CD4-positive, alpha-beta memory T cell (primary cell): ENCODE measurements at regions of chr18 and their contacts with region 1.

Region 1: GRCh38 chr18:2994603-2995432 is 18.1 kb downstream of the LPIN2 start:
- DNase-seq: peak; percentile 75 to 84 (median 79)
- H3K4me3 ChIP-seq: peak overlapping the region in 1 of 2 donors; percentile 29
- H3K4me3 Mint-ChIP-seq: peak overlapping the region; percentile 53 to 81 (median 68)
- H3K27ac ChIP-seq: peak overlapping the region; percentile 28
- H3K27ac Mint-ChIP-seq: peak overlapping the region; percentile 61 to 94 (median 90)
- H3K4me1 ChIP-seq: peaks cover 62% of the 10 kb centered on the region
- H3K4me1 Mint-ChIP-seq: peaks cover 57 to 87% (median 73%) of the 10 kb centered on the region in 4 donors
- H3K27me3 ChIP-seq: no peaks in the 10 kb centered on the region
- H3K27me3 Mint-ChIP-seq: no peaks in the 10 kb centered on the region

Region 2: DNA sequence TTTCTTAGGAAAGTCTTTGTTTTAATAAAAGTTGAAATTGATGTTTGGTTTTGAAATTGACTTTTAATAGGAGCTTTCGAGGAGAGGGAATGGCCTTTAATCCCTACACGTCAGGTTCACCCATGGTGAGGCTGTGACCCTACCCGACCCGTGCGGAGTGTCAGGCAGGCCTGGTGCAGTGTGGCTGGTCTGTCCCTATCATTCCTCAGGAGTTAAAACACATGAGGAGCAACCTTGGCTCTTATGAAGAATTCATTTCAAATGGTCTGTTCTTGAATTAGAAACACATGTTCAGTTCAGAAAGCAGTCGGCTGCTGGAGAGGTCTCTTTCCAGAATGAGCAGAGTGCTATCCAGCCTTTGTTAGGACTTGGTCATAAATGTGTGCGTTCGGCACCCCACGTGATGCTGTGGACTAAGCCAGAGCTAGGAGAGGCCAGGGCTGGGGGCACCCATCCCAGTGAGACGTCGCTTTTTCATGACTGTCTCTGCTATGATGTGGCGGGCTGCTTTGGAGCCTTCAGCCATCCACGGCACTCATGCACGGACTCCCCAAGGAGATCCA is 93.3 kb before region 1 on chr18:
- CTCF ChIA-PET with region 1: no interaction called
- POLR2A ChIA-PET with region 1: no interaction called
- intact Hi-C with region 1: no loop called
- DNase-seq: no peak
- H3K4me3 ChIP-seq: no peak overlapping the region
- H3K4me3 Mint-ChIP-seq: no peak overlapping the region
- H3K27ac ChIP-seq: no peak overlapping the region
- H3K27ac Mint-ChIP-seq: no peak overlapping the region
- H3K4me1 ChIP-seq: peaks cover 6% of the 10 kb centered on the region
- H3K4me1 Mint-ChIP-seq: peaks cover 4 to 25% (median 6%) of the 10 kb centered on the region in 4 donors
- H3K27me3 ChIP-seq: no peaks in the 10 kb centered on the region
- H3K27me3 Mint-ChIP-seq: no peaks in the 10 kb centered on the region

Region 3: GRCh38 chr18:2923464-2923863 is 71.4 kb before region 1 on chr18:
- CTCF ChIA-PET with region 1: interaction called, 263 read pairs
- POLR2A ChIA-PET with region 1: interaction called, 3 read pairs
- intact Hi-C with region 1: no loop called
- DNase-seq: no peak
- H3K4me3 ChIP-seq: no peak overlapping the region
- H3K4me3 Mint-ChIP-seq: no peak overlapping the region
- H3K27ac ChIP-seq: no peak overlapping the region
- H3K27ac Mint-ChIP-seq: peak overlapping the region in 1 of 7 donors; percentile 51
- H3K4me1 ChIP-seq: no peaks in the 10 kb centered on the region
- H3K4me1 Mint-ChIP-seq: peaks cover 0 to 2% (median 0%) of the 10 kb centered on the region in 4 donors
- H3K27me3 ChIP-seq: no peaks in the 10 kb centered on the region
- H3K27me3 Mint-ChIP-seq: no peaks in the 10 kb centered on the region

Region 4: DNA sequence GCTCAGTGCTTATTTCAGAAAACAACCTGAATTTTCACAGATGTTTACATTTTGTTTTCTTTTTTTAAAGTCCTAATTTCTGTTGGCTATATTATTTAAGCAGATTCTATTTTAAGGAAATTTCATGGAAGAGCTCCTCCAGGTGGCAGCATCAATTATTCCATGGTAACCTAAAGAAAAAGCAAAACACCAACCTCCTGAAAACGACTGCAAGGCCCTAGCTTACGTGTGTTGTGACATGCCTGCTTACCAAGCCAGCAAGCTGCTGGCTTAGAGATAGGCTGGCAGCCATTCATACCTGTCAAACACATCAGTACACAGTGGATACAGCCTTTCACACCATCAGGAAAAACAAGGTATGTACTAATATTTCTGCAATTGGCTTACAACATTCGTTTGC is 46.8 kb before region 1 on chr18:
- CTCF ChIA-PET with region 1: interaction called, 19 read pairs
- POLR2A ChIA-PET with region 1: interaction called, 1,352 read pairs
- intact Hi-C with region 1: no loop called
- DNase-seq: no peak
- H3K4me3 ChIP-seq: no peak overlapping the region
- H3K4me3 Mint-ChIP-seq: no peak overlapping the region
- H3K27ac ChIP-seq: no peak overlapping the region
- H3K27ac Mint-ChIP-seq: peak overlapping the region in 2 of 7 donors; percentile 41 to 57
- H3K4me1 ChIP-seq: peaks cover 39% of the 10 kb centered on the region
- H3K4me1 Mint-ChIP-seq: peaks cover 33 to 66% (median 51%) of the 10 kb centered on the region in 4 donors
- H3K27me3 ChIP-seq: no peaks in the 10 kb centered on the region
- H3K27me3 Mint-ChIP-seq: no peaks in the 10 kb centered on the region

Region 5: GRCh38 chr18:2971741-2972552 is 22.9 kb before region 1 on chr18:
- CTCF ChIA-PET with region 1: interaction called, 304 read pairs
- POLR2A ChIA-PET with region 1: interaction called, 1,352 read pairs
- intact Hi-C with region 1: no loop called
- DNase-seq: peak; percentile 66 to 91 (median 72)
- H3K4me3 ChIP-seq: peak overlapping the region; percentile 34 to 37
- H3K4me3 Mint-ChIP-seq: peak overlapping the region; percentile 82 to 94 (median 88)
- H3K27ac ChIP-seq: peak overlapping the region; percentile 79
- H3K27ac Mint-ChIP-seq: peak overlapping the region; percentile 88 to 98 (median 96)
- H3K4me1 ChIP-seq: peaks cover 100% of the 10 kb centered on the region
- H3K4me1 Mint-ChIP-seq: peaks cover 72 to 96% (median 86%) of the 10 kb centered on the region in 4 donors
- H3K27me3 ChIP-seq: no peaks in the 10 kb centered on the region
- H3K27me3 Mint-ChIP-seq: no peaks in the 10 kb centered on the region

Region 6: GRCh38 chr18:3012964-3013804 is 18.4 kb after region 1 on chr18 and contains the start of gene LPIN2:
- CTCF ChIA-PET with region 1: interaction called, 108 read pairs
- POLR2A ChIA-PET with region 1: interaction called, 136 read pairs
- intact Hi-C with region 1: loop called (anchors 1 kb)
- DNase-seq: peak; percentile 97 to 98 (median 98)
- H3K4me3 ChIP-seq: peak within 1 kb of the TSS; percentile 55 to 70
- H3K4me3 Mint-ChIP-seq: peak within 1 kb of the TSS; percentile 93 to 99 (median 96)
- H3K27ac ChIP-seq: peak within 1 kb of the TSS; percentile 63
- H3K27ac Mint-ChIP-seq: peak within 1 kb of the TSS; percentile 94 to 98 (median 98)
- H3K4me1 ChIP-seq: peaks cover 68% of the 10 kb centered on the region
- H3K4me1 Mint-ChIP-seq: peaks cover 51 to 75% (median 68%) of the 10 kb centered on the region in 4 donors
- H3K27me3 ChIP-seq: no peaks in the 10 kb centered on the region
- H3K27me3 Mint-ChIP-seq: no peaks in the 10 kb centered on the region
- total RNA-seq, gene LPIN2: 95.4 to 103 TPM

Region 7: DNA sequence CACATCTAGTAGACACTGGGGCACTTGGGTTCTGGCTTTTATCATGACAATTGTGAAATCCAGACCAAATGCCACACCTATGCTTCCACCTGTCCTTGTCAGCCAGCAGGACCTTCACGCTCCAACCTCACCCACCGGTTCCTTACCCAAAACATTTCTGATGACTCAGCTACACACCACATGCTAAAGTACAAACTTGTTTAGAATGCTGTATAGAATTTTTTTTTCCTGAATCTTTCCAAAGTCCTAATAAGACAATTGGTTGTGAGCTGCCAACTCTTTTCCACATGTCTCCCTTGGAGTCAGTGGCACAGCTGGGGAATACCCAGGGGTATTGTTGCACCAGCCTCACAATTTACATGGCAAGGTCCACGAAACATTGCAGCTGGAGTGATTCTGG is 93.6 kb after region 1 on chr18:
- CTCF ChIA-PET with region 1: interaction called, 18 read pairs
- POLR2A ChIA-PET with region 1: interaction called, 3 read pairs
- intact Hi-C with region 1: no loop called
- DNase-seq: no peak
- H3K4me3 ChIP-seq: no peak overlapping the region
- H3K4me3 Mint-ChIP-seq: no peak overlapping the region
- H3K27ac ChIP-seq: no peak overlapping the region
- H3K27ac Mint-ChIP-seq: peak overlapping the region in 1 of 7 donors; percentile 72
- H3K4me1 ChIP-seq: no peaks in the 10 kb centered on the region
- H3K4me1 Mint-ChIP-seq: peaks cover 0 to 7% (median 5%) of the 10 kb centered on the region in 4 donors
- H3K27me3 ChIP-seq: no peaks in the 10 kb centered on the region
- H3K27me3 Mint-ChIP-seq: no peaks in the 10 kb centered on the region

Region 8: DNA sequence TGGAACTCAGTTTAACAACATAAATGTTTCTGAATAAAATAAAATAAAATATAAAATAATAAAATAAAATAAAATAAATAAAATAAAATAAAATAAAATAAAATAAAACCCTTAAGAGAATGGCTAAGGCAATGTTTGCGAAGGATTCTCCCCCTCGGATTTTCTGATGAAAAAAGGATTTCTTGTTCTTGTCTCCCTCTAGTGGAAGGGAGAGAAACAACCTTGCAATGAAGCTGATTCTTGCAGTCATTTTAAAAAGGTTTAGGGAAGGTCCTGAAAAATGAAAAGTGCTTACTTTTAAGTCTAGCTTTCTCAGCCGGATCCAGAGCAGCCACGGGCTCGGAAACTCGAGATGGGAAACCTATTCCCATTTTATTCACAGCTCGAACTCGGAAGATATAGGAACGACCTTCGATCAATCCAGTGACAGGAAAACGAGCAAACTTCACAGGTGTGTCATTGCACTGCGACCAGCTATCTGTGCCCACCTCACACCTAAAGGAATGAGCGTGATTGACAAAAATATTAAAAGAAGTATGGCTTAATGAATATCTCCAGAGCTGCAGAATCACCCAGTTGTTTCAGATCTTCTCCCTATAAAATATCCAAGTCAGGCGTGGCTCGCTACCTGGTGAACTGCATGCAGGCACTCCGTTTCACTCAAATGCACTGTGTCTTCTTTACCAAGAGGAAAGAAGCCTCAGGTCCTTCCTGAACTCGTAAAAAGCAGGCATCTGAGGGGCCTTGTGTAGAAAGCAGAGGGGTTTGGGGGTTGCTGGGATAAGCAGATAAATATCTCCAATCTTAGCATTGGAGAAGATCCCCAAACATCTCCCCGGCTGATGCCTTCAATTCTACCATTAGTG is 156.8 kb after region 1 on chr18:
- CTCF ChIA-PET with region 1: interaction called, 114 read pairs
- POLR2A ChIA-PET with region 1: interaction called, 9 read pairs
- intact Hi-C with region 1: loop called (anchors 1 kb)
- DNase-seq: peak in 4 of 5 donors; percentile 23 to 34 (median 31)
- H3K4me3 ChIP-seq: no peak overlapping the region
- H3K4me3 Mint-ChIP-seq: no peak overlapping the region
- H3K27ac ChIP-seq: no peak overlapping the region
- H3K27ac Mint-ChIP-seq: peak overlapping the region in 1 of 7 donors; percentile 46
- H3K4me1 ChIP-seq: no peaks in the 10 kb centered on the region
- H3K4me1 Mint-ChIP-seq: peaks cover 0 to 6% (median 4%) of the 10 kb centered on the region in 4 donors
- H3K27me3 ChIP-seq: no peaks in the 10 kb centered on the region
- H3K27me3 Mint-ChIP-seq: peaks cover 0 to 4% of the 10 kb centered on the region in 2 donors

Region 9: DNA sequence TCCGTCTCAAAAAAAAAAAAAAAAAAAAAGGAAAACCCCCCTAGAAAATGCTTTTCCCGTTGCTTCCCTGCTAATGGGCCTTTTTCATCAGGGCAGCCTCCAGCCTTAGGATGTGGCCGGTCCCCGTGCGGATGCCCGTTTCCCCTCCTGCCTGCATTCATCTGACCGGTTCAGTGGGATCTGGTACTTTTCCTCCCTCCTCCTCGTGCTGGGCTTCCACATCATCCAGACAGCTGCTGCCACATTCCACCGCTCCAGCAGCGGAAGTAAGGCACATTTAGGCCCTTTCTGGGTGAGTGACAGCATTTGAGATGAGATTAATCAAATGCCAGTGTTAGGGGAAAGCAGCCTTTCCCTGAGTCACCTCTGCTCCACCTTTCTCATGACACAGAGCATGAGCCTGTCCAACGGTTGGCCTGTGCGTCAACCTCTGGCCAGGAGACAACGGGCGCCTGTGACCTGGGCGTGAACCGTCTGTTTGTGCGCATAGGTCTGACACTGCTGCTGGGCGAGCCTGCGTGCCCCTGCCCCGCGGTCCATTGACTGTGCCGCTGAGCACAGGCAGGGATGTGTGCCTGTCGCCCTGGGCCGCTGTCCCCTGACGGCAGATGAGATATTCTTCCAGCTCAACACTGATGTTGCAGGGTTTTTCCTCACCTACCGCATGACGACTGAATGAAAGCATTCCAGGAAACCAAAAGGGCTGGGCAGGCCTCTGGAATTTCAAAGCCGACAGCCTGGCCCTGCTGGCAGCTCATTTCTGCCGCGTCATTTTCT is 629.1 kb after region 1 on chr18:
- CTCF ChIA-PET with region 1: no interaction called
- POLR2A ChIA-PET with region 1: no interaction called
- intact Hi-C with region 1: no loop called
- DNase-seq: no peak
- H3K4me3 ChIP-seq: no peak overlapping the region
- H3K4me3 Mint-ChIP-seq: no peak overlapping the region
- H3K27ac ChIP-seq: no peak overlapping the region
- H3K27ac Mint-ChIP-seq: peak overlapping the region in 4 of 7 donors; percentile 38 to 85 (median 70)
- H3K4me1 ChIP-seq: peaks cover 19% of the 10 kb centered on the region
- H3K4me1 Mint-ChIP-seq: peaks cover 12 to 23% (median 16%) of the 10 kb centered on the region in 4 donors
- H3K27me3 ChIP-seq: no peaks in the 10 kb centered on the region
- H3K27me3 Mint-ChIP-seq: no peaks in the 10 kb centered on the region